ENCODE measurements at regions of chr7 and their contacts with region 1.

Region 1: DNA sequence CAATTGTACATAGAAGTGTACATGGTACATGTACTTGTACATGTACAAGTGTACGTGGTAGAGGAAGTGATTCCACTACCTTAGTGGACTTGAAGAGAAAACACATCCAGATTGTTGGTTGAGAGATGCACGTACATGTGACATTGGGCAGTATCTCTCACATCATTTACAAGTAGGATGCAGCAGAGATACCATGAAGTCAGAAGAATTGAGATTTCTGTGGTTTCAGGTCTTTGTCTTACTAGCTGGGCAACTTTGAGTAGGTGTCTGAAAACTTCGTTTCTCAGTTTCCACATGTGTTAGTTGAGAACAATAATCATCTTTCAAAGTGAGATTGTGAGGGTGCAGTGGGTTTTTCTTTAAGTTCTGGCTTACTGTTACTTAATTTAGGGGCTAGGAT is 21.5 kb downstream of the CLDN12 start:
- DNase-seq: no peak
- ATAC-seq: peak; percentile 93
- H3K4me3 Mint-ChIP-seq: no peak overlapping the region
- H3K27ac Mint-ChIP-seq: peak overlapping the region; percentile 48
- H3K4me1 Mint-ChIP-seq: peaks cover 18% of the 10 kb centered on the region
- H3K27me3 Mint-ChIP-seq: peaks cover 3% of the 10 kb centered on the region

Region 2: GRCh38 chr7:89731751-89732445 is 692.8 kb before region 1 on chr7:
- CTCF ChIA-PET with region 1: no interaction called
- POLR2A ChIA-PET with region 1: no interaction called
- intact Hi-C with region 1: no loop called
- DNase-seq: no peak
- ATAC-seq: no peak
- H3K4me3 Mint-ChIP-seq: no peak overlapping the region
- H3K27ac Mint-ChIP-seq: no peak overlapping the region
- H3K4me1 Mint-ChIP-seq: no peaks in the 10 kb centered on the region
- H3K27me3 Mint-ChIP-seq: peaks cover 1% of the 10 kb centered on the region

Region 3: GRCh38 chr7:90155206-90155605 is 269.5 kb before region 1 on chr7:
- CTCF ChIA-PET with region 1: interaction called, 37 read pairs
- POLR2A ChIA-PET with region 1: no interaction called
- intact Hi-C with region 1: loop called (anchors 1 kb)
- DNase-seq: no peak
- ATAC-seq: no peak
- H3K4me3 Mint-ChIP-seq: no peak overlapping the region
- H3K27ac Mint-ChIP-seq: no peak overlapping the region
- H3K4me1 Mint-ChIP-seq: peaks cover 5% of the 10 kb centered on the region
- H3K27me3 Mint-ChIP-seq: peaks cover 31% of the 10 kb centered on the region

Region 4: DNA sequence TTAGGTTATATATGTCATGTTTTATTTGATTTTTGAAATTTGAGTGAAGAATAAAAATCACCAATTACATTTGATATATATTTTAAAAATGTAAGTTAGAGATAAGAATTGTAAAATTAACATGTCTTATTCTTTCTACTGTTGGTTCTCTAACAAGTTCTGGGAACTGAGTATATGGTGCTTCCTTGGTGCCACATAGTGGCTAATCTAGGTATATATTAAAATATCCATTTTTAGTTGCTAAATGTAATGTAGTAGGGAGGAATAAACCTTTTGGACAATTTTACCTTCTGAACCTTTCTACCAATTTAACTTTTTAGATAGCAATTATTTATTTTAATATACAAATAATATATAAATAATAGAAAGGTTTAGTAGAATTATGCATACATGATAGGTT is 162.3 kb before region 1 on chr7:
- CTCF ChIA-PET with region 1: interaction called, 5 read pairs
- POLR2A ChIA-PET with region 1: no interaction called
- intact Hi-C with region 1: loop called (anchors 2 to 5 kb)
- DNase-seq: no peak
- ATAC-seq: no peak
- H3K4me3 Mint-ChIP-seq: no peak overlapping the region
- H3K27ac Mint-ChIP-seq: no peak overlapping the region
- H3K4me1 Mint-ChIP-seq: no peaks in the 10 kb centered on the region
- H3K27me3 Mint-ChIP-seq: peaks cover 5% of the 10 kb centered on the region

Region 5: DNA sequence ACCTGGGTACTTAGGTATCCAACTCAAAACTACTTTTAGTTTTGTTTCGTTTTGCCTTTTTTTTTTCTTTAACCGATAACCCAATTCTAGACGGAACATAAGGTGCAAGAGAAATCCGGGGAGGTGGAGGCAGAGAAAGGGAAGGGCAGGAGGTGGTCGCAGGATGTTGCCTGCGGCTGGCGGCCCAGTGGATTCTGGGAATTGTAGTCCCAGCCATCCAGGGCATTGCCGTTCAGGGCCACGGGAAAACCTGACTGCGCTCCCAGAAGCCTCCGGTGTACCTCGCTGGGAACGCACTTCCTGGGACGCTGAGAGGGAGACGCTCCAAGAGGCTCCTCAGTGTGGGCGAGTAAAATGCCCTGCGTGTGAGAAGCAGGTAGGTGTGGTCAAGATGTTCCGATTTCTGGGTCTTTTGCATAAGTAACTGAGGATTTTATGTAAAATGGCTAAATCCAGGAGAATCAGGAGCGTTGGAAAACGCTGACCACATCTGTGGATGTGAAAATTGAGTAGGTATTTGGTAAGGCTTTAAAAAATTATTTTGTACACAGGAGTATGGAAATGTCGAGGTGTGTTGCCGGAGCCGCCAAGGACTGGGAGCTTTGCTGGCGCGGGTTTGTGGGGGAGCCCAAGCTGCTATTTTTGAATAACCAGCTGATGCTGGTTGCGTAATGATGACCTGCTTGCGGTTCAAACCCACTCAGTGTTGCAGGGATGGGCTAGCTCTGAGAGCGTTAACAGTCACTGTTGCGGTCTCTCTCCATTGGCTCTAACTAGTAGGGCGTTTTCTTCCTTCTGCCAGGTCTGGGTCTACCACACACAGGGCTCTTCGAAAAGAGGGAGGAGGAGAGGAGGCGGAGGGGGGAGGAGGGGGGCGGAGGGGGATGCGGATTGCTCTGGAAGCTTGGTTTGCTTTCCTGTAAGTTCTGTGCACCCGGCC is 21.3 kb before region 1 on chr7 and contains the start of gene CLDN12:
- CTCF ChIA-PET with region 1: interaction called, 4 read pairs
- POLR2A ChIA-PET with region 1: no interaction called
- intact Hi-C with region 1: loop called in 1 of 2 experiments (anchors 1 kb)
- DNase-seq: peak; percentile 88
- ATAC-seq: peak; percentile 98
- H3K4me3 Mint-ChIP-seq: peak within 1 kb of the TSS; percentile 96
- H3K27ac Mint-ChIP-seq: peak within 1 kb of the TSS; percentile 97
- H3K4me1 Mint-ChIP-seq: peaks cover 11% of the 10 kb centered on the region
- H3K27me3 Mint-ChIP-seq: no peaks in the 10 kb centered on the region
- total RNA-seq, gene CLDN12: 5.4 to 5.8 TPM

Region 6: DNA sequence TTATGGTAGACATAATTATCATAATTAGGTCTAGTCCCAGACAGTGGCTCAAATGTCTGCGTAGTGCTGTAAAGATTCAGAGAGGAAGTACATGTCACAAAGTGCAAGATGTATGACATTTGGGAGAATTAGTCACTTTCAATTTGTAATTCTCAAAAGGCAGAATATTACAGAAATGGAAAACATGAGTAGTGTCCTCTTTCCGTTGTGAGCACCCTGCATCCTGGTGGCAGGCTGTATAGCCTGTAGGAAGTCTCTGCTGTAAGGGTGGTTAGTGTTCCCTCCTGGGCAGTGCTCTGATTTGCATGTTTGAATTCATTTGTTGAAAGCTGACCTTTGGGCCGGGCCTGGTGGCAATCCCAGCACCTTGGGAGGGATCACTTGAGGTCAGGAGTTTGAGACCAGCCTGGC is 188.4 kb after region 1 on chr7:
- CTCF ChIA-PET with region 1: no interaction called
- POLR2A ChIA-PET with region 1: no interaction called
- intact Hi-C with region 1: no loop called
- DNase-seq: peak; percentile 55
- ATAC-seq: peak; percentile 90
- H3K4me3 Mint-ChIP-seq: no peak overlapping the region
- H3K27ac Mint-ChIP-seq: peak overlapping the region; percentile 75
- H3K4me1 Mint-ChIP-seq: peaks cover 17% of the 10 kb centered on the region
- H3K27me3 Mint-ChIP-seq: peaks cover 8% of the 10 kb centered on the region